ENCODE measurements at regions of chr4 and their contacts with region 1.

Region 1: DNA sequence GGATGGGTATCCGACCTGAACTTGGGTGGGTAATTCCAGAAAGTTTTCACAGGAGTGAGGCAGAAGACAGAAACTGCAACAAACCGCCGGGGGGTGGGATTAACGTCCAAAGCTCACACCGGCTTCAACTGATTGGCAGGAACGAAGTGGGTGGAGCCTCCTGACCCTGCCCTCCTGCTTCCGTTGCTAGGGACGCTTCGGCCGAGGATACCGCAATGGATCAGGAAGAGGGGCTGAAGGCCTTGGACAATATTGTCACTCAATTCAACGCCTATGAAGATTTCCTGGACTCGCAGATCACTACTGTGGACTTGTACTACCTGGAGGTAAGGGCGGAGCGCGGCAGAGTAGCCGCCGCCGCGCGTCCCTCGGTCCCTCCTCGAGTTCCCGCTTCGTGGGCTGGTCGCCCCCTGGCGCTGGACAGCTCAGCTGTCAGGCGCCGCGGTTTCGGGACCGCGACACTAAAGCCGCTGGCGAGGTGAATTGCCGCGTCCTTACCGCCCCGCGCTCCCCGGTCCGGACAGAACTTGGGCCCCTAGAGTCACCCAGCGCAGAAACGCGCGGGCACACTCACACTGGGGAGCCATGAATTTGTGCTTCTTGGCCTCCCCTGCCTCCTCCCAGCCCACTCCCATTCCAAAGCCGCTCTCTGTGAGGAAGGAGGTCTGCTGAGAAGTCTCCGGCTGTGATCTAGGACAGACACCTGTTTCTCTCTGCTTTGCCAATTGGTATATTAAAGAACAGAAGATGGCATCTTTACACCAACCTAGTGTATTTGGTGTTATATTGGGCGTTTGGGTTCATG is at the start of gene CFAP299:
- DNase-seq: peak; percentile 46
- H3K4me3 ChIP-seq: peak within 1 kb of the TSS; percentile 73
- H3K27me3 ChIP-seq: no peaks in the 10 kb centered on the region
- CTCF ChIP-seq: peak; percentile 79
- polyA plus RNA-seq, gene CFAP299: 0.23 and 3.3 TPM in 2 replicates

Region 2: GRCh38 chr4:80322716-80323115 is 13.0 kb before region 1 on chr4:
- CTCF ChIA-PET with region 1: interaction called, 28 read pairs
- POLR2A ChIA-PET with region 1: no interaction called
- DNase-seq: no peak
- H3K4me3 ChIP-seq: no peak overlapping the region
- H3K27me3 ChIP-seq: no peaks in the 10 kb centered on the region
- CTCF ChIP-seq: peak; percentile 54

Measured in BJ (cell line).